Activated T-helper 2 cell treated with anti-CD3 and anti-CD28 coated beads, Interferon-gamma antibody, Interleukin-2, Interleukin-4, amounts not matched to agents 10 μg/mL and 5 μg/mL and 100 μg/mL, durations not matched to agents 14 hours and 24 hours and 36 hours (primary cell): ENCODE measurements at regions of chr17 and their contacts with region 1.

Region 1: GRCh38 chr17:81238817-81239600 is at the starts of genes NDUFAF8 and TEPSIN:
- DNase-seq: peak; percentile 97
- H3K4me3 Mint-ChIP-seq: peak within 1 kb of the TSS; percentile 96
- H3K27ac Mint-ChIP-seq: peak within 1 kb of the TSS; percentile 95
- H3K4me1 Mint-ChIP-seq: peaks cover 20% of the 10 kb centered on the region
- H3K27me3 Mint-ChIP-seq: no peaks in the 10 kb centered on the region
- total RNA-seq, gene NDUFAF8: 57.7 and 58.1 TPM in 2 replicates
- total RNA-seq, gene TEPSIN: 33.4 and 39.1 TPM in 2 replicates

Region 2: DNA sequence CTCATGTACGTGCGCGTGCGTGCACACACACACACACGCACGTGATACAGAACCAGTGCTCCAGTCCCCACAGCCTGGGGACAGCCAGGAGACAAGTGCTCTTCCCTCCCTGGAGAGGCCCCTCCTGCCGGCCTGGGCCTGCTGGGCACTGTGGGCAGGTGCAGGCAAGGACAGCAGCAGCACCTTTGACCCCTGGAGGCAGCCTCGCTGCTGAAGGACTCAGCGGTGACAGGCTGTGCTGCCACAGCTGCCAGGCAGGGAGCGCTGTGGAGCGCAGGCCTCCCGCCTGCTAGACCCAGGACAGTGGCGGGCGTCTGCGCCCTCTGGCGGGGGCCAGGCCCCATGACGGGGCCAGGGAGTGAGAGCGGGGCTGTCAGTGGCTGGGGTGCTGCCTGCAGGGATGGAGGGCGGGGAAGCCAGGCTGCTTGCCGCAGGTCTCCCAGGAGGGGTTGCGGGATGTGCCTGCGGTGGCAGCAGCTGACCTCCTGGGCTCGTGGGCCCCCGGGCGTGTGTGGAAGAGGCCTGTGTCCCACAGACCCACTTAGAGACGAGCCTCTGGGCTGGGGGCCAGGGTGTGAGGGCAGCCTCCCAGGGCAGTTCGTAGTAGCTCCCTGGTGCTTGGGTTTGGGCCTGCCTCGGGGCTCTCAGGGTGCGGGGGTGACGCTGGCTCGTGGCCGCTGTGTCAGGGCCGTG is 137.2 kb before region 1 on chr17:
- intact Hi-C with region 1: loop called (anchors 5 kb)
- DNase-seq: peak; percentile 85
- H3K4me3 Mint-ChIP-seq: no peak overlapping the region
- H3K27ac Mint-ChIP-seq: no peak overlapping the region
- H3K4me1 Mint-ChIP-seq: peaks cover 3% of the 10 kb centered on the region
- H3K27me3 Mint-ChIP-seq: no peaks in the 10 kb centered on the region

Region 3: DNA sequence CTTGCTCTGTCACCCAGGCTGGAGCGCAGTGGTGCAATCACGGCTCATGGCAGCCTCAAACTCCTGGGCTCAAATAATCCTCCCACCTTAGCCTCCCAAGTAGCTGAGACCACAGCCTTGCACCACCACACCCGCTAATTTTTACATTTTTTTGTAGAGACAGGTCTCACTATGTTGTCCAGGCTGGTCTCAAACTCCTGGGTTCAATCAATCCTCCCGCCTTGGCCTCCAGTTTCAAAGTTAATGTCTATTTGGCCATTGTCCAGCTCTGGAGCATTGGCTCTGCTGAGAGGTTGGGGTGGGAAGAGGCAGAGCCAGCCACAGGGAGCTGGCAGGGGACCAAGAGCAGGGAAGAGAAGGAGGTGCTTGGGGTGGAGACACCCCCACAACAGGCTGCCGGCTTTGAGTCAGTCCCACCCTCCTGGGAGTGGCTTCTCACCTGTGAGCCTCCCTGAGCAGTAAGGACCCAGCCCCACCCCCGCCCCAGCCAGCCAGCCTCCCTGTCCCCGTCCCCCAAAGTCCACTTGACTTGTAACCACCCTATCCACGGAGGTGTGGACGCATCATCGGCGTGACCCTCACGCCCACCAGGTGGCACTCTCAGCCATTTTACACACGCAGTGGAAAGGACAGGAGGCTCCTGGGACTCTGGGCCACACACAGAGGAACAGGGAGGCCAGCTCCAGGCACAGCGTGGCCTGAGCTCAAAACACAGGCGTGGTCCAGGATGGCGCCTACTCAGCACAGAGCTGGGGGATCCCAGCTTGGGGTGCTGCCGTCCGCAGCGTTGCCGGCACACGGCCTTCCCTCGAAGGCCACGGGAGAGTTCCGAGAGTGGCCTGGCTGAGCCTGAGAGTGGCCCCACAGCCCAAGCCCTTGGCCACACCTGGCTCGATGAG is 96.5 kb before region 1 on chr17:
- intact Hi-C with region 1: loop called (anchors 5 kb)
- DNase-seq: peak; percentile 43
- H3K4me3 Mint-ChIP-seq: no peak overlapping the region
- H3K27ac Mint-ChIP-seq: no peak overlapping the region
- H3K4me1 Mint-ChIP-seq: no peaks in the 10 kb centered on the region
- H3K27me3 Mint-ChIP-seq: no peaks in the 10 kb centered on the region

Region 4: GRCh38 chr17:81222906-81223761 is 15.9 kb before region 1 on chr17 and contains the start of gene CEP131:
- intact Hi-C with region 1: loop called (anchors 1 kb)
- DNase-seq: peak; percentile 98
- H3K4me3 Mint-ChIP-seq: peak within 1 kb of the TSS; percentile 71
- H3K27ac Mint-ChIP-seq: peak within 1 kb of the TSS; percentile 80
- H3K4me1 Mint-ChIP-seq: peaks cover 18% of the 10 kb centered on the region
- H3K27me3 Mint-ChIP-seq: no peaks in the 10 kb centered on the region
- total RNA-seq, gene CEP131: 14.0 and 14.8 TPM in 2 replicates

Region 5: DNA sequence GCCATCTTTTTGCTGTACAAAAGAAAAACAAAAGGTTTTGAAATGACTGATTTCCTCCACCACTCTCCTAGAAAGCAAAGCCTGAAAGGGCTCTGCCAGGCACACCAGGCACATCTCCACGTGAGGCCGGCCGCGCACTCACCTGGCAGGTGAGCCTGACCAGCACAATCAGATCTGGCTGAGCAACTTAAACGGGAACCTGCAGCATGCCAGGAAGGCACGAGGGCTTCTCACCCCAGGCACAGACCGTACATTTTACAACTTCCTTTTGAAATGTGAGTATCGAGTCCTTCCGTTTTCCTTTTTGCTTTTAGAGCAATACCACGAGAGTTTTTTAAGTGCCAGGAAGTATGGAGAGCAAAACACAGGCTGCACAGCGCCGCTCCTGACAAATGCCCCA is 33.6 kb after region 1 on chr17:
- intact Hi-C with region 1: no loop called
- DNase-seq: no peak
- H3K4me3 Mint-ChIP-seq: no peak overlapping the region
- H3K27ac Mint-ChIP-seq: no peak overlapping the region
- H3K4me1 Mint-ChIP-seq: no peaks in the 10 kb centered on the region
- H3K27me3 Mint-ChIP-seq: no peaks in the 10 kb centered on the region